ENCODE measurements at regions of chrX and their contacts with region 1.

Region 1: GRCh38 chrX:53422086-53422860 is at the start of gene SMC1A:
- DNase-seq: peak; percentile 99 to 100
- H3K4me3 ChIP-seq: peak within 1 kb of the TSS; percentile 77 to 81
- H3K27ac ChIP-seq: peak within 1 kb of the TSS; percentile 89 to 95
- H3K4me1 ChIP-seq: peaks cover 10% of the 10 kb centered on the region in 2 donors
- H3K27me3 ChIP-seq: no peaks in the 10 kb centered on the region
- CTCF ChIP-seq: no peak
- POLR2A ChIP-seq: peak; percentile 68 to 71
- total RNA-seq, gene SMC1A: 34.8 to 85.5 (median 40.8) TPM

Region 2: GRCh38 chrX:53317365-53318069 is 104.8 kb before region 1 on chrX:
- intact Hi-C with region 1: loop called (anchors 10 kb)
- DNase-seq: peak; percentile 61 to 67
- H3K4me3 ChIP-seq: no peak overlapping the region
- H3K27ac ChIP-seq: no peak overlapping the region
- H3K4me1 ChIP-seq: no peaks in the 10 kb centered on the region
- H3K27me3 ChIP-seq: peaks cover 0 to 4% of the 10 kb centered on the region in 2 donors
- CTCF ChIP-seq: peak; percentile 65 to 78 (median 72)
- POLR2A ChIP-seq: no peak

Region 3: DNA sequence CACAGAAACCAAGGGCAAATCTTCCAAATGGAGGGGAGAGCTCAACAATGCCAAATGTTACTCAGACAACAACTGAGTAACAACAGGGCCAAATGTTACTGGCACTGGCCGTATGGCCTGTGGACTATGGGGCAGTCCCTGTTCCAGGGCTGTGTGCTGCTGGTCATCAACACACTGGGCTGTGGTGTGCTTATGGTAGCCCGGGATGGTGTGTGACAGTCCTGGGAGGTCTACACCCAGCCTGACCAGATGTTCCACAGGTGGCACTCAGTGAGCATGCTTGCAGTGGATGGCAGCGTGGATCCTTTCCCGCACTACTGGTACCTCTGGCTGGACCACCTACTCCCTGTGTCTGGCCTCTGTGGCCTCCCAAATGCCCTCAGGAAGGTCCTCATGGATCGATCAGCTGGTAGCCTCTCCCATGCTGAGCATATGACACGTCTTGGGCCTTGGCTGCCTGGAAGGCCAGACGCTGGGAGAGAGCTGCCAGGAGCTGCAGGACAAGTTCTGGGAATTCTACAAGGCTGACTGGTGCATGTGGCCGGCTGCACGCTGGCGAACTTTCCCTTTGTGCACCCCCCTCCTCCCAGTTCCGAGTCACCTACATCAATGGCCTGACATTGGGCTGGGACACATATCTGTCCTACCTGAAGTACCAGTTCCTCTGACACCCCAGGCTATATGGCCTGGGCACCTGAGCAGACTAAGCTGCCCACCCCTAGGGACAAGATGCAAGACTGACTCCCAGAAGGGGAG is 81.2 kb before region 1 on chrX:
- intact Hi-C with region 1: no loop called
- DNase-seq: no peak
- H3K4me3 ChIP-seq: no peak overlapping the region
- H3K27ac ChIP-seq: no peak overlapping the region
- H3K4me1 ChIP-seq: no peaks in the 10 kb centered on the region
- H3K27me3 ChIP-seq: peaks cover 0 to 4% of the 10 kb centered on the region in 2 donors
- CTCF ChIP-seq: no peak
- POLR2A ChIP-seq: no peak

Region 4: GRCh38 chrX:53471346-53471745 is 49.1 kb after region 1 on chrX:
- intact Hi-C with region 1: no loop called
- DNase-seq: no peak
- H3K4me3 ChIP-seq: no peak overlapping the region
- H3K27ac ChIP-seq: no peak overlapping the region
- H3K4me1 ChIP-seq: no peaks in the 10 kb centered on the region
- H3K27me3 ChIP-seq: no peaks in the 10 kb centered on the region
- CTCF ChIP-seq: no peak
- POLR2A ChIP-seq: no peak

Region 5: GRCh38 chrX:54509400-54509799 is 1087.1 kb after region 1 on chrX:
- intact Hi-C with region 1: no loop called
- DNase-seq: no peak
- H3K4me3 ChIP-seq: no peak overlapping the region
- H3K27ac ChIP-seq: no peak overlapping the region
- H3K4me1 ChIP-seq: no peaks in the 10 kb centered on the region
- H3K27me3 ChIP-seq: no peaks in the 10 kb centered on the region
- CTCF ChIP-seq: no peak
- POLR2A ChIP-seq: no peak